ENCODE measurements at regions of chr2 and their contacts with region 1.

Region 1: DNA sequence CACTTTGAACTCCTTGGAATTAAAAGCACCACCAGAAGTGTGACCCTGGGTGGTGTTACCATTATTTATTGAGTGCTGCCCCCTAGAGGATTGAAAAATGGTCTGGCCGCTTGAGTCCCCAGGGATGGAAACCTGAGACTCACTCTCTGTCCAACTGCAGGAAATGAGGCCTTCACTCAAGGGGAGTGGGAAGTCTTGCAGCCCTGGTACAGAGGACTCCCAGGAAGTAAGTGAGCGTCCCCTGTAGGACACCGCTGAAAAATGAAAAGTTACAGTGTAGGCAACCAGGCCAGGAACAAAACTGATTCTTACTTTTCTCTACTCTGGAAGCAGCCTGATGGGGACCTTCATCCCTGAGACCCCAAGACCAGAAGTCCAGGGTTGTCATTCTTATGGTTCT is 2.2 kb upstream of the NRP2 start:
- DNase-seq: peak; percentile 58
- H3K4me3 Mint-ChIP-seq: no peak overlapping the region
- H3K27ac Mint-ChIP-seq: no peak overlapping the region
- H3K4me1 Mint-ChIP-seq: peaks cover 15% of the 10 kb centered on the region
- H3K27me3 Mint-ChIP-seq: peaks cover 48% of the 10 kb centered on the region

Region 2: GRCh38 chr2:204628926-204629712 is 1050.9 kb before region 1 on chr2:
- CTCF ChIA-PET with region 1: no interaction called
- POLR2A ChIA-PET with region 1: no interaction called
- intact Hi-C with region 1: no loop called
- DNase-seq: no peak
- H3K4me3 Mint-ChIP-seq: no peak overlapping the region
- H3K27ac Mint-ChIP-seq: no peak overlapping the region
- H3K4me1 Mint-ChIP-seq: no peaks in the 10 kb centered on the region
- H3K27me3 Mint-ChIP-seq: peaks cover 4% of the 10 kb centered on the region

Region 3: DNA sequence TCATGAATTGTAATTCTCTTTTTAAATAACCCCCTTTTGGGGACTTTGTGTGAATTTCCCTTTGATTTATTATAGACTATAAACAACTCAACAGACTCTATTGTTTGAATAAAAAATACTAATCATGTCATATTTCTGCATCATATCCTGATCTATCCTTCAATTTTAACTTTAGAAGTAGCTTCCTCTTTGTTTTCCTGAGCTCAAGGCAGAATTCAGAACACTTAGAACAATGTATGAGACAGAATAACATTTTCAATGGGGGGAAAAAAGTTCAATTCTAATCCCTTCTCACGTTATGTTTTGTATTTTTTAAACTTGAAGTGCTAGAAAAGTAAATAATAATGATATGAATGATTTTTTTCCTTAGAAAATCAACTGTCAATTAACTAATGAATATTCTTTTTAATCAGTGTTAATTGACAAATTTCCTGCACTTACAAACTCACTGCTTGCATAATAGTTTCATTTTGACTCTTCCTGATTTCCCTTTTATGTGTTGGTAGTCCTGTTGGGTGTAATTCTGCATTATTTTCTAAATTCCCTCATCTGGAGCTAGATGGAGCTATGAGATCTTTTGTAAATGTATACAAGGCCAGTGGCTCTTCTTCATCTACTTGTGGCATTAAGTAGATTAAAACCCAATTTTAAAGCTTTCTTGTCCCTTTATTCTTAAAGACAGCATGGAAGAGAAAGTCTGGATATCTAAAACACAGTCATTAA is 808.7 kb before region 1 on chr2:
- CTCF ChIA-PET with region 1: interaction called, 13 read pairs
- POLR2A ChIA-PET with region 1: no interaction called
- intact Hi-C with region 1: loop called (anchors 2 kb)
- DNase-seq: no peak
- H3K4me3 Mint-ChIP-seq: no peak overlapping the region
- H3K27ac Mint-ChIP-seq: no peak overlapping the region
- H3K4me1 Mint-ChIP-seq: peaks cover 16% of the 10 kb centered on the region
- H3K27me3 Mint-ChIP-seq: no peaks in the 10 kb centered on the region

Region 4: GRCh38 chr2:205372141-205372540 is 307.9 kb before region 1 on chr2:
- CTCF ChIA-PET with region 1: no interaction called
- POLR2A ChIA-PET with region 1: no interaction called
- intact Hi-C with region 1: loop called (anchors 5 kb)
- DNase-seq: no peak
- H3K4me3 Mint-ChIP-seq: no peak overlapping the region
- H3K27ac Mint-ChIP-seq: no peak overlapping the region
- H3K4me1 Mint-ChIP-seq: peaks cover 11% of the 10 kb centered on the region
- H3K27me3 Mint-ChIP-seq: no peaks in the 10 kb centered on the region

Region 5: GRCh38 chr2:205612636-205613035 is 67.4 kb before region 1 on chr2:
- CTCF ChIA-PET with region 1: interaction called, 6 read pairs
- POLR2A ChIA-PET with region 1: no interaction called
- intact Hi-C with region 1: loop called (anchors 5 kb)
- DNase-seq: peak; percentile 75
- H3K4me3 Mint-ChIP-seq: no peak overlapping the region
- H3K27ac Mint-ChIP-seq: peak overlapping the region; percentile 29
- H3K4me1 Mint-ChIP-seq: peaks cover 21% of the 10 kb centered on the region
- H3K27me3 Mint-ChIP-seq: peaks cover 14% of the 10 kb centered on the region

Region 6: DNA sequence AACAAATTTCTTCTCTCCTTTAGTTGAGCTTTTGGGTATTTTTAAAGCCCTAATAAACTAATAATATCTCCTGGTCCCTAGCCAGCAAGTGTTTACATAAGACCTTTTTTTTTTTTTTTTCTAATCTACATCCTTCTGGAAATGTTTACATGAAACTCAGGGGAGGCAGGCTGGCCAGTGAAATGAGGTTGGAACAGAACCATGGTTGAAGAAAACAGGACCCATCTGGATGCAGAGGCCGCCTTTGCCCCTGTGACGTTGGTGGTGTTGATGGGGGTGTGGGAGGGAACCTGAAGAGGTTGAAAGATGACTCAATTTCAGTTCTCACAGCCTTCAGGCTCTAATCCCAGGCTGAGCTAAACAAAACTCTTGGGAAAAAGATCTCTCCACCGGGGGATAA is 120.7 kb after region 1 on chr2:
- CTCF ChIA-PET with region 1: no interaction called
- POLR2A ChIA-PET with region 1: no interaction called
- intact Hi-C with region 1: no loop called
- DNase-seq: no peak
- H3K4me3 Mint-ChIP-seq: no peak overlapping the region
- H3K27ac Mint-ChIP-seq: no peak overlapping the region
- H3K4me1 Mint-ChIP-seq: no peaks in the 10 kb centered on the region
- H3K27me3 Mint-ChIP-seq: peaks cover 4% of the 10 kb centered on the region

Region 7: GRCh38 chr2:205814039-205814364 is 133.9 kb after region 1 on chr2:
- CTCF ChIA-PET with region 1: no interaction called
- POLR2A ChIA-PET with region 1: no interaction called
- intact Hi-C with region 1: loop called (anchors 5 kb)
- DNase-seq: no peak
- H3K4me3 Mint-ChIP-seq: no peak overlapping the region
- H3K27ac Mint-ChIP-seq: no peak overlapping the region
- H3K4me1 Mint-ChIP-seq: no peaks in the 10 kb centered on the region
- H3K27me3 Mint-ChIP-seq: peaks cover 9% of the 10 kb centered on the region